ENCODE measurements at regions of chr11 and their contacts with region 1.

Region 1: DNA sequence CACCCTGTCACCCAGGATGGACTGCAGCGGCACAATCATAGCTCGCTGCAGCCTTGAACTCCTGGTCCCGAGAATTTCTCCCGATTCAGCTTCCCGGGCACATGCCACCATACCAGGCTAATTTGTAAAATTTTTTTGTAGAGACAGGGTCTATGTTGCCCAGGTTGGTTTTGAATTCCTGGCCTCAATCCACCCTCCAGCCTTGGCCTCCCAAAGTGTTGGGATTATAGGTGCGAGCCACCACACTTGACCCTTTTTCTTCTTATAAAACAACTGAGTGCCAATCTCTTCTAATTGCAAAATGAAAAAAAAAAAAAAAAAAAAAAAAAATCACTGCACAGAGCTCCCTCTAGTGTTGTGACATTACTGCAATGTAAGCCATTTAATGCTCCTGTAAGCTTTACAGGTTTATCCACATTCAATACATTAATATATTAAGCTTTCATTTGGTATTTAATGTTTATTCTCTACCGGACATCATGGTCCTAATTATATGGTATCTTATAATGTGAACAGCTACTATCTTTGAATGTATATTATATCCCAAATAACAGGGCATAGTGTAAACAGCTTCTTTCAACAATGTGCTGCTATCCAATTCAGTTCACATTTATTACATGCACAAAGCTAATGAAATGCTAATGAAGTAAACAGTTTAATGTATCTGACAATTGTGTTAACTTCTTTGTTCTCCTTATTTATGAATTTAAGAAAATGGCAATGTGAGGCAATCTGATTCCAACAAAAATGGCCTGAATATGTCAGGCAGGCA is 44.6 kb downstream of the COPB1 start:
- DNase-seq: no peak
- H3K4me3 ChIP-seq: no peak overlapping the region
- H3K27ac ChIP-seq: no peak overlapping the region
- H3K4me1 ChIP-seq: no peaks in the 10 kb centered on the region
- H3K27me3 ChIP-seq: no peaks in the 10 kb centered on the region
- CTCF ChIP-seq: peak; percentile 68 to 70

Region 2: GRCh38 chr11:13983081-13983751 is 471.8 kb before region 1 on chr11:
- CTCF ChIA-PET with region 1: no interaction called
- dilution Hi-C with region 1: no loop called
- in situ Hi-C with region 1: no loop called
- intact Hi-C with region 1: no loop called
- DNase-seq: no peak
- H3K4me3 ChIP-seq: no peak overlapping the region
- H3K27ac ChIP-seq: no peak overlapping the region
- H3K4me1 ChIP-seq: no peaks in the 10 kb centered on the region
- H3K27me3 ChIP-seq: peaks cover under 1% of the 10 kb centered on the region
- CTCF ChIP-seq: no peak

Region 3: DNA sequence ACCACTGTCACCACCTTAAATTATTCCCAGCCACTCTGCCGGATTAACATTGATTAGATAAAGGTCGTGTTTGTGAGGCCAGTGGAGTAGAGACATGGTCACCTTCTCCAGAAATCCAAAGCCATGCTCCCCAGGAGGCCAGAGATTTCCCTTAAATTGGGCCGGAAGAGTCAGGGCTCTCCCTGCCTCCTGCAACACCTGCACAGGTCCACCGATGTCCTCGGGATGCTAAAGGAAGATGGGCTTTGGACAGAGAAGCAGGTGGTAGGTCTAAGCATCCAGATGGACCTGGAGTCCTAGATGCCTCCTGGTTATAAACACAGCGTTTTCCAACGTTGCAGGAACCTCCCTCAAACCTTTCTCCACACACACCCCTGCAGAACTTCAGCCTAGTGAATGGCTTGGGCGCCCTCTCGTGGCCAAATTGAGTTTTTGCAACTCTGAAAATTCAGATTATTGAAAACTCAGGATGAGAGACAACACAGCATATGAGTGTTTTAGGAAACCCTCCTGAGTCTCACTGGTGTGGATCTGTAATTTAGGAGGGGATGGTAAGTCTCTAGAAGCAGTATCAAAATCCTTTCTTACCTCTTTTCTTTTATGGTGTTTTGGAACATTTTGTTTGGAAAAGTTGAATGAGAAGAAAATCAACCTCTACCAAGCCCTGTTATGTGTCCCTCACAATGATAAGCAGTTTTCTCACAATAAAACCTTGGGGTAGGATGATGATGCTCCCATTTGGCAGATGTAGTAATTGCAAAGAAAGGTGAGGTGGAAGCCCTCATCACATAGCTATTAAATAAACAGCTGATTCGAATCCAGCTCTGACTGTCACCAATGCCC is 205.7 kb before region 1 on chr11:
- CTCF ChIA-PET with region 1: no interaction called
- dilution Hi-C with region 1: no loop called
- in situ Hi-C with region 1: no loop called
- intact Hi-C with region 1: no loop called
- DNase-seq: peak; percentile 36
- H3K4me3 ChIP-seq: no peak overlapping the region
- H3K27ac ChIP-seq: no peak overlapping the region
- H3K4me1 ChIP-seq: no peaks in the 10 kb centered on the region
- H3K27me3 ChIP-seq: peaks cover 3% of the 10 kb centered on the region
- CTCF ChIP-seq: peak; percentile 70 to 85

Region 4: DNA sequence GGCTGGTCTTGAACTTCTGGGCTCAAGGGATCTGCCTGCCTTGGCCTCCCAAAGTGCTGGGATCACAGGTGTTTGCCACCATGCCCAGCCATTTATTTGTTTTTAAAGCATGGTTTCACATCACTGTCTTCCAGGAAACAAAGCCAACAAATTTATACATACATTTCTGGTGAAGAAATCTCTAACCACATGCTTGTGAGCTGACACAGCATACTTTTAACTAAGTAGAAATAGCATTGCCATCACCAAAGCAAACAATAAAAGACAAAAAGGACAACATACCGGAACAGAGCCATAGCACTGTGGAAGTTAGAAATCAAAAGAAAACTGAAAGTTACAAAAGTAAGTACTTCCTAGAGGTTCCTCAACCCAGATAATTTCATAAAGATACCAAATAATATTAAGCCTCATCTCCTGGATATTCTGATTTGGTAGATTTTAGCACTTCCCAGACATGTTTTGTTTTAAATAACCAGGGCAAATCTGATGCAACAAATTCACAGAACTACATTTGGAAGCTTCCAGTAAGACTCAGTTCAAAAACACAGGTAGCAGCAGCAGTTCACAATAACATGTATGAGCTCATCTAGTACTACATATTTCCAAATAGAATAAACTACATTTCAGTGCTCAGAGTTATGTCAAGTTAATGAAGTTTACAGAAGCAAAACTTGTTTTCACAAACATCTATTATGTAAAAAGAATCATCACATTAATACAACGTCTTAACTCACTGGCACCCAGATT is 166.7 kb before region 1 on chr11:
- CTCF ChIA-PET with region 1: no interaction called
- dilution Hi-C with region 1: loop called (anchors 25 kb)
- in situ Hi-C with region 1: no loop called
- intact Hi-C with region 1: no loop called
- DNase-seq: no peak
- H3K4me3 ChIP-seq: no peak overlapping the region
- H3K27ac ChIP-seq: peak overlapping the region; percentile 16
- H3K4me1 ChIP-seq: no peaks in the 10 kb centered on the region
- H3K27me3 ChIP-seq: no peaks in the 10 kb centered on the region
- CTCF ChIP-seq: no peak

Region 5: GRCh38 chr11:14358729-14359439 is 96.2 kb before region 1 on chr11 and contains the start of gene RRAS2:
- CTCF ChIA-PET with region 1: no interaction called
- dilution Hi-C with region 1: no loop called
- in situ Hi-C with region 1: no loop called
- intact Hi-C with region 1: loop called (anchors 2 kb)
- DNase-seq: peak; percentile 69
- H3K4me3 ChIP-seq: peak within 1 kb of the TSS; percentile 84 to 92 (median 88)
- H3K27ac ChIP-seq: peak within 1 kb of the TSS; percentile 88
- H3K4me1 ChIP-seq: peaks cover 5% of the 10 kb centered on the region
- H3K27me3 ChIP-seq: no peaks in the 10 kb centered on the region
- CTCF ChIP-seq: no peak
- total RNA-seq, gene RRAS2: 125 to 141 TPM

Region 6: DNA sequence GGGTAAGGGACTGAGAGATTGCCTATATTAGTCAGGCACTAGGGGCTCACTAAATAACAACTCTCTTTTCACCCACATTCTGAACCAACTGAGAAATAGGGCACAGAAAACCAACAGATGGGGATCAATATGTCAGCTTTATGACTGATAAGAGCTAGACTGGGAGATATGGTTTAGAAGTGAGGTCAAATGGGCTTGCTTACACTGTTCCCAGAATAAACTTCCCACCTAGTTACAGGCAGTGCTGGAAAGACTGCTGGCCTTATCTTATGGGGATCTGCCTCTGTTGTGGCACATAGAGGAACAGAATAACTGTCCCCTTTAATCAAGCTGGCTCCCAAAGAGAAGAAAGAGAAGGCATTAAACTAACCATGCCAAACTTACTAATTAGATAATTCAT is 85.4 kb before region 1 on chr11:
- CTCF ChIA-PET with region 1: no interaction called
- dilution Hi-C with region 1: loop called (anchors 5 kb)
- in situ Hi-C with region 1: no loop called
- intact Hi-C with region 1: no loop called
- DNase-seq: no peak
- H3K4me3 ChIP-seq: no peak overlapping the region
- H3K27ac ChIP-seq: no peak overlapping the region
- H3K4me1 ChIP-seq: peaks cover 10% of the 10 kb centered on the region
- H3K27me3 ChIP-seq: no peaks in the 10 kb centered on the region
- CTCF ChIP-seq: no peak

Region 7: DNA sequence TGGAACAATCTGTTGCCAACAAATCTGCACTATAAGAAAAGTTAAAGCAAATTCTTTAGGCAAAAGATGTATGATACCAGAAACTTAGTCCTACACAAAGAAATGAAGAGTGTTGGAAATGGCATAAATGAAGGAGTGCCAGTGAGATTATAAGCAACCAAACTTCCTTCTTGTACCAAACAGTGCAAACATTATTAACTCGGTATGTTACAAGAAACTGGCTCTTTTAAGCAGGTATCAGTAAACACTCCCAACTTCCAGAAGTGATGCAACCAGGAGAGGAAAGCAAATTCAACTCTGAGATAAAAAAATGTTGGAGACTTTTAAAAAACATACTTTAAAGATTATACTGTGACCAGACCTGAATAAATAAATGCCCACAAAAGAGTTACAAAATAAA is 16.1 kb after region 1 on chr11:
- CTCF ChIA-PET with region 1: interaction called, 17 read pairs
- dilution Hi-C with region 1: no loop called
- in situ Hi-C with region 1: no loop called
- intact Hi-C with region 1: no loop called
- DNase-seq: no peak
- H3K4me3 ChIP-seq: no peak overlapping the region
- H3K27ac ChIP-seq: no peak overlapping the region
- H3K4me1 ChIP-seq: no peaks in the 10 kb centered on the region
- H3K27me3 ChIP-seq: no peaks in the 10 kb centered on the region
- CTCF ChIP-seq: no peak